B cell (primary cell): ENCODE measurements at regions of chr13 and their contacts with region 1.

Region 1: GRCh38 chr13:48233046-48233907 is at the start of gene ITM2B:
- DNase-seq: peak; percentile 80
- ATAC-seq: peak; percentile 78
- H3K4me3 ChIP-seq: peak within 1 kb of the TSS; percentile 84 to 98 (median 89)
- H3K4me3 Mint-ChIP-seq: peak within 1 kb of the TSS; percentile 96
- H3K27ac ChIP-seq: peak within 1 kb of the TSS; percentile 83 to 89
- H3K27ac Mint-ChIP-seq: peak within 1 kb of the TSS; percentile 97
- H3K4me1 ChIP-seq: peaks cover 27 to 36% of the 10 kb centered on the region in 2 donors
- H3K4me1 Mint-ChIP-seq: peaks cover 46% of the 10 kb centered on the region
- H3K27me3 ChIP-seq: no peaks in the 10 kb centered on the region
- H3K27me3 Mint-ChIP-seq: peaks cover 5% of the 10 kb centered on the region
- CTCF ChIP-seq: peak; percentile 57
- total RNA-seq, gene ITM2B: 165 and 177 TPM in 2 replicates

Region 2: GRCh38 chr13:48078251-48078656 is 155.0 kb before region 1 on chr13:
- CTCF ChIA-PET with region 1: no interaction called
- POLR2A ChIA-PET with region 1: no interaction called
- intact Hi-C with region 1: loop called (anchors 1 kb)
- DNase-seq: peak; percentile 81
- ATAC-seq: peak; percentile 99
- H3K4me3 ChIP-seq: no peak overlapping the region
- H3K4me3 Mint-ChIP-seq: no peak overlapping the region
- H3K27ac ChIP-seq: peak overlapping the region in 1 of 2 donors; percentile 55
- H3K27ac Mint-ChIP-seq: peak overlapping the region; percentile 1
- H3K4me1 ChIP-seq: peaks cover 5 to 6% of the 10 kb centered on the region in 2 donors
- H3K4me1 Mint-ChIP-seq: peaks cover 9% of the 10 kb centered on the region
- H3K27me3 ChIP-seq: no peaks in the 10 kb centered on the region
- H3K27me3 Mint-ChIP-seq: no peaks in the 10 kb centered on the region
- CTCF ChIP-seq: peak; percentile 74

Region 3: GRCh38 chr13:48126944-48127830 is 106.1 kb before region 1 on chr13:
- CTCF ChIA-PET with region 1: interaction called, 26 read pairs
- POLR2A ChIA-PET with region 1: interaction called, 5 read pairs
- intact Hi-C with region 1: loop called (anchors 1 kb)
- DNase-seq: peak; percentile 81
- ATAC-seq: peak; percentile 81
- H3K4me3 ChIP-seq: no peak overlapping the region
- H3K4me3 Mint-ChIP-seq: peak overlapping the region; percentile 3
- H3K27ac ChIP-seq: no peak overlapping the region
- H3K27ac Mint-ChIP-seq: no peak overlapping the region
- H3K4me1 ChIP-seq: peaks cover 10 to 12% of the 10 kb centered on the region in 2 donors
- H3K4me1 Mint-ChIP-seq: peaks cover 7% of the 10 kb centered on the region
- H3K27me3 ChIP-seq: no peaks in the 10 kb centered on the region
- H3K27me3 Mint-ChIP-seq: peaks cover 7% of the 10 kb centered on the region
- CTCF ChIP-seq: peak; percentile 82

Region 4: DNA sequence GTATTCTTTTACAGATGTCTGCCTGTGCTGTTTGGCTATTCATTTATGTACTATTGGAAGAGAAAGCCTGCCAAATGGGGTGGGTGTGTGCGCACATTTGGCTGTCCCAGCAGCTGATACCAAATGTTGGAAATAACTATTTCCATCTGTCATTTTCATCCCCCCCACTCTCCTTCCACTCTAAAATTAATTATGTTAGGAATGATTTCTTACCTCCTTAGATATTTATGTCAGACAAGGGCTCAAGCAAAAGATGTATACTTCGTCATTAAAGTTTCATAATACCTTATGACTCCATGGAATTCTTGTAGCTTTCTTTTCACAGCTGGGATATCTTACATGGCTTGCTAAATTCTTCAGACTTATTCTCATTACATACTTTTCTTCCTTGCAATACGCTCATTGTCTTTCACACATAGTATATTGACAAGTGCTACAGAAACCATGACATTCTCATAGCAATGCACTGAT is 18.4 kb after region 1 on chr13:
- CTCF ChIA-PET with region 1: interaction called, 4 read pairs
- POLR2A ChIA-PET with region 1: interaction called, 4 read pairs
- intact Hi-C with region 1: loop called (anchors 2 kb)
- DNase-seq: no peak
- ATAC-seq: no peak
- H3K4me3 ChIP-seq: no peak overlapping the region
- H3K4me3 Mint-ChIP-seq: no peak overlapping the region
- H3K27ac ChIP-seq: no peak overlapping the region
- H3K27ac Mint-ChIP-seq: no peak overlapping the region
- H3K4me1 ChIP-seq: no peaks in the 10 kb centered on the region
- H3K4me1 Mint-ChIP-seq: peaks cover 24% of the 10 kb centered on the region
- H3K27me3 ChIP-seq: no peaks in the 10 kb centered on the region
- H3K27me3 Mint-ChIP-seq: no peaks in the 10 kb centered on the region
- CTCF ChIP-seq: no peak

Region 5: GRCh38 chr13:48303359-48304142 is 70.3 kb after region 1 on chr13 and contains the start of gene RB1:
- CTCF ChIA-PET with region 1: interaction called, 5 read pairs
- POLR2A ChIA-PET with region 1: interaction called, 9 read pairs
- intact Hi-C with region 1: loop called (anchors 1 kb)
- DNase-seq: peak; percentile 97
- ATAC-seq: peak; percentile 69
- H3K4me3 ChIP-seq: peak within 1 kb of the TSS; percentile 70 to 98 (median 89)
- H3K4me3 Mint-ChIP-seq: peak within 1 kb of the TSS; percentile 99
- H3K27ac ChIP-seq: peak within 1 kb of the TSS; percentile 99 to 100
- H3K27ac Mint-ChIP-seq: peak within 1 kb of the TSS; percentile 100
- H3K4me1 ChIP-seq: peaks cover 22 to 26% of the 10 kb centered on the region in 2 donors
- H3K4me1 Mint-ChIP-seq: peaks cover 34% of the 10 kb centered on the region
- H3K27me3 ChIP-seq: no peaks in the 10 kb centered on the region
- H3K27me3 Mint-ChIP-seq: no peaks in the 10 kb centered on the region
- CTCF ChIP-seq: no peak
- total RNA-seq, gene RB1: 70.4 and 74.8 TPM in 2 replicates

Region 6: GRCh38 chr13:48334534-48335127 is 101.4 kb after region 1 on chr13:
- CTCF ChIA-PET with region 1: interaction called, 15 read pairs
- POLR2A ChIA-PET with region 1: no interaction called
- intact Hi-C with region 1: no loop called
- DNase-seq: peak; percentile 63
- ATAC-seq: peak; percentile 33
- H3K4me3 ChIP-seq: no peak overlapping the region
- H3K4me3 Mint-ChIP-seq: no peak overlapping the region
- H3K27ac ChIP-seq: no peak overlapping the region
- H3K27ac Mint-ChIP-seq: no peak overlapping the region
- H3K4me1 ChIP-seq: no peaks in the 10 kb centered on the region
- H3K4me1 Mint-ChIP-seq: peaks cover 12% of the 10 kb centered on the region
- H3K27me3 ChIP-seq: no peaks in the 10 kb centered on the region
- H3K27me3 Mint-ChIP-seq: no peaks in the 10 kb centered on the region
- CTCF ChIP-seq: peak; percentile 82

Region 7: DNA sequence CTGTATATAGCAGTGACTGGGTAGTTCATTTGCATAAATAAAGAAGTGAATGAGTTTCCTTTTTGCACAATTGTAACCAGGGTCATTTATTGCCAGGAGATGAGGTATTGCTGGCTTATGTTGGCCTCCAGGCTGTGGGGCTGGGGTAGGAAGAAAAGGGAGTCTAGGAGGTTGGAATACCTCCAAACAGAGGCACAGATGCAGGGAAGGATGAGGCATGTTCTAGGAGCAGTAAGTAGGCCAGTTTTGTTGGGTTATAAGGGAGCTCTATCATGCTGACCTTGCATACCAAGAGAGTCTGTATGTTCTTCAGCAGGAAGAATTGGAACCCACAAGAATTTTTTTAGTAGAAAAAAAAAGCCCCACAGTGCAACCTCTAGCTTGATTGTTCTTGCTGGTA is 403.3 kb after region 1 on chr13:
- CTCF ChIA-PET with region 1: no interaction called
- POLR2A ChIA-PET with region 1: no interaction called
- intact Hi-C with region 1: no loop called
- DNase-seq: no peak
- ATAC-seq: no peak
- H3K4me3 ChIP-seq: no peak overlapping the region
- H3K4me3 Mint-ChIP-seq: no peak overlapping the region
- H3K27ac ChIP-seq: no peak overlapping the region
- H3K27ac Mint-ChIP-seq: no peak overlapping the region
- H3K4me1 ChIP-seq: no peaks in the 10 kb centered on the region
- H3K4me1 Mint-ChIP-seq: no peaks in the 10 kb centered on the region
- H3K27me3 ChIP-seq: peaks cover 0 to 16% (median 0%) of the 10 kb centered on the region in 4 experiments
- H3K27me3 Mint-ChIP-seq: peaks cover 29% of the 10 kb centered on the region
- CTCF ChIP-seq: no peak